ENCODE measurements at regions of chr17 and their contacts with region 1.

Region 1: GRCh38 chr17:47229535-47230443 is 20.6 kb downstream of the MYL4 start:
- DNase-seq: peak; percentile 45 to 95
- H3K4me3 ChIP-seq: peak overlapping the region; percentile 39 to 40
- H3K27ac ChIP-seq: peak overlapping the region; percentile 92 to 93
- H3K4me1 ChIP-seq: peaks cover 10 to 33% of the 10 kb centered on the region in 2 donors
- H3K27me3 ChIP-seq: no peaks in the 10 kb centered on the region
- CTCF ChIP-seq: peak; percentile 98 to 99 (median 99)

Region 2: GRCh38 chr17:47188876-47189731 is 40.7 kb before region 1 on chr17 and contains the start of gene CDC27:
- intact Hi-C with region 1: loop called (anchors 1 kb)
- DNase-seq: peak; percentile 95 to 100
- H3K4me3 ChIP-seq: peak within 1 kb of the TSS; percentile 92 to 96
- H3K27ac ChIP-seq: peak within 1 kb of the TSS; percentile 95
- H3K4me1 ChIP-seq: peaks cover 10 to 13% of the 10 kb centered on the region in 2 donors
- H3K27me3 ChIP-seq: no peaks in the 10 kb centered on the region
- CTCF ChIP-seq: no peak
- total RNA-seq, gene CDC27: 112 TPM

Region 3: GRCh38 chr17:47205419-47205963 is 24.3 kb before region 1 on chr17:
- intact Hi-C with region 1: loop called (anchors 2 kb)
- DNase-seq: peak in 1 of 2 donors; percentile 76
- H3K4me3 ChIP-seq: peak overlapping the region in 1 of 2 donors; percentile 0
- H3K27ac ChIP-seq: peak overlapping the region; percentile 82 to 85
- H3K4me1 ChIP-seq: peaks cover 5 to 9% of the 10 kb centered on the region in 2 donors
- H3K27me3 ChIP-seq: no peaks in the 10 kb centered on the region
- CTCF ChIP-seq: no peak

Region 4: DNA sequence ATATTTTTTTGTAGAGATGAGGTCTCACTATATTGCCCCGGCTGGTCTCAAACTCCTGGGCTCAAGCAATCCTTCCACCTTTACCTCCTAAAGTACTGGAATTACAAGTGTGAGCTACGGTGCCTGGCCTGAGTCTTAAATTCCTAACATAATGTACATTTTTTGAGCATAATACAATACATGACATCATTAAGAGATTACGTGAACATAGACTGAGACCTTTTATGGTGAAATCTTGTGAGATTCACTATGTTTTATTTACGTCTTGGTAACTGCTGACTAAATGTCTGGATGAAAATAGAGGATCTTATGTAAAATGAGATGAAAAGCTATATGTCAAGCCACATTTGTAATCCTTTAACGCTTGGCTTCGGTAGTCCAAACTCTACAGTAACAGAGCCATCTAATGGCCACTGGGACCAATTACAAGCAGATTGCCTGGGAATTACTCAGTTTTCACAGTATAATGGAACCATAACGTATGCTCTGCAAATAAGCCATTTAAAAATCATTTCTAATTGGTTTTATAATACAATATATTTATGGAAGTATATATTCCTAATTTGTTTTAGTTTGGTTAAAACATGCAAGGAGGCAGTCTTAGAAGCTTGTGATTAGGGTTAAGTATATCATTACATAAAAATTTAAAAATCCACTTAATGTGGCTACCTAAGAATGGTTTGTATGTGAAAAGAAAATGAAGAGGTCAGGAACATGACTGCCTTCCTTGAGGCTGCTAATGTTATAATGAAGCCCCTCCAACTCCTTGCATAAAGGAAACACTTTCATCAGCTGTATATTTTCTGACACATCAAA is 85.9 kb after region 1 on chr17:
- intact Hi-C with region 1: loop called (anchors 1 kb)
- DNase-seq: no peak
- H3K4me3 ChIP-seq: no peak overlapping the region
- H3K27ac ChIP-seq: peak overlapping the region; percentile 80 to 81
- H3K4me1 ChIP-seq: peaks cover 19 to 40% of the 10 kb centered on the region in 2 donors
- H3K27me3 ChIP-seq: no peaks in the 10 kb centered on the region
- CTCF ChIP-seq: peak; percentile 77 to 83 (median 79)

Region 5: GRCh38 chr17:47323382-47324222 is 93.8 kb after region 1 on chr17 and contains the start of gene EFCAB13:
- intact Hi-C with region 1: loop called (anchors 2 kb)
- DNase-seq: peak; percentile 62 to 95
- H3K4me3 ChIP-seq: peak within 1 kb of the TSS; percentile 65 to 77
- H3K27ac ChIP-seq: peak within 1 kb of the TSS; percentile 89 to 93
- H3K4me1 ChIP-seq: peaks cover 0 to 5% of the 10 kb centered on the region in 2 donors
- H3K27me3 ChIP-seq: no peaks in the 10 kb centered on the region
- CTCF ChIP-seq: peak; percentile 21 to 51 (median 32)
- total RNA-seq, gene EFCAB13: 1.2 TPM

Region 6: DNA sequence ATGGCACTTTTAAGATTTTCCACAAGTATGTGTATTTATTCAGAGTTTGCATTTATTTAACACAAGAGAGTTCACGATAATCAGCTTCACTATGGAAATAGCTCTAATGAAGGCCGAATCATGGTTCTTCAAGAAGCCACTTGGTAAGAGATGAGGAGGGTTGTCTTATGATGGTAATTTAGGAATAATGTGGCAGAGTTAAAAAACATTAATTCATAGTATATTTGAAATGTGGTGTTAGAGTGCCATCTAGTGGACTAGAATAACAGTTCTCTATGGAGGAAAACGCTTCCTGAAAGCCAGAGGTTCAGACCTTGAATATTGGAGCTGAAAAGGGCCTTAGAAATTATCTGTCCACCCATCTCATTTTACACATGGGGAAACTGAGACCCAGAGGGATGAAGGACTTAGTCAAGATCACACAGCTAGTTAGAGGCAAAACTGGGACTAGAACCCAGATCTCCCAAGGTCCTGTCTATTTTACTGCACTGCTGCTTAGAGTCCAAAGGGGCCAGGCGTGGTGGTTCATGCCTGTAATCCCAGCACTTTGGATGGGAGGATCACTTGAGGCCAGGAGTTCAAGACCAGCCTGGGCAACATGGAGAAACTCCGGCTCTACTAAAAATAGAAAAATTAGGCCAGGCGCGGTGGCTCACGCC is 386.1 kb after region 1 on chr17:
- intact Hi-C with region 1: loop called (anchors 10 kb)
- DNase-seq: no peak
- H3K4me3 ChIP-seq: no peak overlapping the region
- H3K27ac ChIP-seq: peak overlapping the region; percentile 19 to 39
- H3K4me1 ChIP-seq: peaks cover 0 to 11% of the 10 kb centered on the region in 2 donors
- H3K27me3 ChIP-seq: no peaks in the 10 kb centered on the region
- CTCF ChIP-seq: peak; percentile 67 to 77 (median 74)